ENCODE measurements at regions of chr3 and their contacts with region 1.

Region 1: DNA sequence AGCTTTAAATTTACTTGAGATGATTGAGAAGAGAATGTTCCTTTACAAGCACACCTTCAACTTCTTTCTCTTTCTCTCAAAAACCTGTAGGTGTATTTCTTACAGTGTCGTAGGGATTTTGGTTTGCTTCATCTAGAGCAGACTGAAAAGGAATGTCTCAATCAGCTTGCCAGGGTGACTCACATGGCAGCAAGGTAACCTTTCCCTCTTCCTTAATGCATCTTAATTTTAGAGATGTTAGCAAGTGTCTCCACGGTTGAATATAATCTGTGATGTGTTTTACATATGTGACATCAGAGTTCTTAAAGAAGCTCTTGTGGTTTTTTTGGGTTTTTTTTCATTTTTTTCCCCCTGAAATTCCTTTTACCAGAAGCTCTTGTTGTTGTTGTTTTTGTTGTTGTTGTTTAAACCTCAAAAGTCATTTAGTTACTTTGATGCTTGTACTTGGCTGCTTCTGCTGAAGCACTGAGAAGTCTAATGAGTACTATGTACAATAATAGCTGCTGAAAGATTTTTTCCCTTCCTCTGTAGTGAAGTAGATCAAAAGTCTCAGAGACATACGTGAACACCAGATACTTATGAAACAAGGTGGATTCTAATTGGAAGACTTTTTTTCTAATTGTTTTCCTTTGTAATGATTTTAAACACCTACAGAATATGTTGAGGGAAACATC is 83.1 kb downstream of the RETNLB start:
- DNase-seq: no peak
- H3K4me3 ChIP-seq: no peak overlapping the region
- CTCF ChIP-seq: no peak
- POLR2A ChIP-seq: no peak

Region 2: GRCh38 chr3:107392549-107393165 is 1281.5 kb before region 1 on chr3:
- intact Hi-C with region 1: no loop called
- DNase-seq: no peak
- H3K4me3 ChIP-seq: no peak overlapping the region
- CTCF ChIP-seq: no peak
- POLR2A ChIP-seq: no peak

Region 3: DNA sequence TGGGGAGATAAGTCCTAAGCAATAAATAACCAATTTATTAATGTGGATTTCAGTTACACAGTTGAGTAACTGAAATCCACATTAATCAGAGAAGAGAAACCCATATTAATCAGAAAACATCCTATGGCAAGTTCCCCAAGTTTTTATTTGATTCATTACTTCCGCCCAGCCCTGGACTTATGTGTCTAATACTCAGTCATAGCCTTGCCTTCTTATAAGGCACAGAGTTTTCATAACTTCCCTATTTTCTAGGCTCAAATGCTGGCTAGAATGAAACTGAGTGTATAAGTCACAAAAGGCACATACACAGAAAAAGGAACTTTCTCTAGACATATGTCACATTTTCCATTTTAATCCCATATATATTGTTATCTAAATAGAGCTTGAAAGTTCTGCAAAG is 612.1 kb before region 1 on chr3:
- intact Hi-C with region 1: no loop called
- DNase-seq: no peak
- H3K4me3 ChIP-seq: no peak overlapping the region
- CTCF ChIP-seq: no peak
- POLR2A ChIP-seq: no peak

Region 4: DNA sequence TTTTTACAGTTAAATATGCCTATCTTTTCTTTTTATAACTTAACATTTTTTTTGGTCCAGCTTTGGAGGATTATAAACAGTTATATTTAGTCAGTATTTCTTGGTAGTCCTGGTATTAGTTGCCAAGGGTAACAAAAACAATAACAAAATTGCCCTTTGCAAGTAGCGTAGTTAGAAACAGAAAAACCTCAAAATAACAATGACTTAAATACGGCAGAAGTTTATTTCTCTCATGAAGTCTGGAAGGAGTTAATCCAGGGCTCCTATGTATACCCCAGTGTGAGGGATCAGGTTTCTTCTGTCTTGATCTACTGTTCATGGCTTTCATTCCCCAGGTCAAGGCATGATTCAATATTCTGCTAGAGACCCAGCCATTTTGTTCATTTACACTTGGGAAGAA is 149.6 kb before region 1 on chr3:
- intact Hi-C with region 1: no loop called
- DNase-seq: no peak
- H3K4me3 ChIP-seq: no peak overlapping the region
- CTCF ChIP-seq: no peak
- POLR2A ChIP-seq: no peak

Region 5: GRCh38 chr3:108862865-108863798 is 189.0 kb after region 1 on chr3:
- intact Hi-C with region 1: no loop called
- DNase-seq: no peak
- H3K4me3 ChIP-seq: no peak overlapping the region
- CTCF ChIP-seq: no peak
- POLR2A ChIP-seq: no peak

Region 6: DNA sequence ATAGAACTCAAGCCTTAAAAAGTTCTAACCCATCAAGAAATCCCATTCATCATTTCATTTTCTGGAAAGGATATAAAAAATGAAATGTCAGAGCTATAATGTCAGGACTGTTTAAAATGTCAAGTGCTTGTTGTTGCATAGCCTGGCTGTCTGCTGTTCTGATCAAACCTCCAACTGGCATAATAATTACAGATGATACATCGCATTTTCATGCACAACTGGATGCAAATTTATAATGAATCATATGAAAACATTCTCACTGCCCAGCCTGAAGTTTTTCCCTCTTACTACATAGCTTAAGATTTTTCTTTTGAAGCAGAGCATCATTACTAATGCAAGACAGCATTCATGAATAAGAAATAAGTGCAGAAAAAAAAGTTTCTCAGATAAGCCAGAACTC is 233.1 kb after region 1 on chr3:
- intact Hi-C with region 1: loop called (anchors 10 kb)
- DNase-seq: no peak
- H3K4me3 ChIP-seq: no peak overlapping the region
- CTCF ChIP-seq: no peak
- POLR2A ChIP-seq: no peak